ENCODE measurements at regions of chr17 and their contacts with region 1.

Region 1: DNA sequence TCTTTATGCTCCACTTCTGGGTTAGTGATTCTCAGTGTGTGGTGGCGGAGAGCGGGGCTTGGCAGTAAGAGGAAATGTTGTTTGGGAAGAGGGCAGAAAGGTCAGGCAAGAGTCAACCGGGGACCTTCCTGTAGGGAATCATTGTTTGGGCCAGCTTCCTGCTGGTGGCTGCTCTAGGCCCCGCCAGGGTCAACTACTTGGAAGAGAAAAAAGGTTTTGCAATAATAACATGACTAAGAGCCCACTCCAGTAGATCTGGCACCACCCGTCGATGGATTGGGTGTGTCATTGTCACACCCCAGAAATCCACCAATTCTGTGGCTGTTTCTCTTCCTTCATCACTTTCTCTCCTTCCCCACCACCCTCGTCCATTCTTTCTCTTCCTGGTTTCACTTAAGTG is 4.2 kb upstream of the KRT24 start:
- DNase-seq: no peak
- ATAC-seq: no peak
- H3K4me3 ChIP-seq: no peak overlapping the region
- H3K27ac ChIP-seq: no peak overlapping the region
- H3K4me1 ChIP-seq: no peaks in the 10 kb centered on the region
- H3K27me3 ChIP-seq: 0 out of 2 replicates have a peak, but pooled peaks cover 3% of the 10 kb centered on the region
- CTCF ChIP-seq: no peak

Region 2: GRCh38 chr17:40499551-40500174 is 208.1 kb before region 1 on chr17:
- CTCF ChIA-PET with region 1: no interaction called
- POLR2A ChIA-PET with region 1: interaction called, 14 read pairs
- in situ Hi-C with region 1: no loop called
- intact Hi-C with region 1: no loop called
- DNase-seq: no peak
- ATAC-seq: peak; percentile 85
- H3K4me3 ChIP-seq: peak overlapping the region in 1 of 2 experiments; percentile 41; a peak in 3 of 4 replicates
- H3K27ac ChIP-seq: no peak overlapping the region
- H3K4me1 ChIP-seq: peaks cover 10% of the 10 kb centered on the region
- H3K27me3 ChIP-seq: no peaks in the 10 kb centered on the region
- CTCF ChIP-seq: no peak